MCF 10A (cell line): ENCODE measurements at regions of chrX and their contacts with region 1.

Region 1: DNA sequence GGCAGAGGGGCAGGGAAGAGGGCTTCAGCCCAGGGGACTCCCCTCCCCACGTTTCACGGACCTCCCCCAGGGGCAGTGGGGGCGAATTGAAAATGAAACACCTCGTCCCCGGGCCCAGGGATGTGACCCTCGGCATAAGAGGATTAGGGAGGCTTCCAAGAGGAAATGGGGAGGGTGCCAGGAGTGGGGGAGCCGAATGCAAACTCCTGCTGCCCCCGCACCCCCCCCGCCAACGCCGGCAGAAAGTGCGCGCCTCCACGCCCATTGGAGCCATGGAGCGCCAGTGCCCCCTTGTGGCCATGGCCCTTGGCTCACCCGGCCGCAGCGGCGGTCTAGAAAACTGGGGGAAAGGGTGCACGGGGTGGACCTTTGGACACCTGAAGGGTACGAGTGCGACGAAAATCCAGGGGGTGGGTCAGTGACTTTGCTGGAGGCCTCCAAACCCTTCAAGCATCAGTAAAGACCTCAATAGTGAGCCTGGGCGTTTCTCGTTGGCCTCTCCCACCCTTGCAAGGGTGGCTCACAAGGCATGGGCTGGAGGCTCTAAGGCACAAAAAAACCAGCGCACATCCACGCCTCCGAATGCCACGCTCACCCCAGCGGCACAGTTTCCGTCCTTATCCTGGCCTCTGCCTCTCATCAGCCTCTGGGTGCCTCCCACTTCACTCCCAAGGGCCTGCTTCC is 120.8 kb upstream of the PJA1 start:
- DNase-seq: peak; percentile 45
- H3K4me3 Mint-ChIP-seq: peak overlapping the region; percentile 60
- H3K27ac Mint-ChIP-seq: no peak overlapping the region
- H3K4me1 Mint-ChIP-seq: peaks cover 5% of the 10 kb centered on the region
- H3K27me3 Mint-ChIP-seq: peaks cover 75% of the 10 kb centered on the region
- CTCF ChIP-seq: peak; percentile 90

Region 2: DNA sequence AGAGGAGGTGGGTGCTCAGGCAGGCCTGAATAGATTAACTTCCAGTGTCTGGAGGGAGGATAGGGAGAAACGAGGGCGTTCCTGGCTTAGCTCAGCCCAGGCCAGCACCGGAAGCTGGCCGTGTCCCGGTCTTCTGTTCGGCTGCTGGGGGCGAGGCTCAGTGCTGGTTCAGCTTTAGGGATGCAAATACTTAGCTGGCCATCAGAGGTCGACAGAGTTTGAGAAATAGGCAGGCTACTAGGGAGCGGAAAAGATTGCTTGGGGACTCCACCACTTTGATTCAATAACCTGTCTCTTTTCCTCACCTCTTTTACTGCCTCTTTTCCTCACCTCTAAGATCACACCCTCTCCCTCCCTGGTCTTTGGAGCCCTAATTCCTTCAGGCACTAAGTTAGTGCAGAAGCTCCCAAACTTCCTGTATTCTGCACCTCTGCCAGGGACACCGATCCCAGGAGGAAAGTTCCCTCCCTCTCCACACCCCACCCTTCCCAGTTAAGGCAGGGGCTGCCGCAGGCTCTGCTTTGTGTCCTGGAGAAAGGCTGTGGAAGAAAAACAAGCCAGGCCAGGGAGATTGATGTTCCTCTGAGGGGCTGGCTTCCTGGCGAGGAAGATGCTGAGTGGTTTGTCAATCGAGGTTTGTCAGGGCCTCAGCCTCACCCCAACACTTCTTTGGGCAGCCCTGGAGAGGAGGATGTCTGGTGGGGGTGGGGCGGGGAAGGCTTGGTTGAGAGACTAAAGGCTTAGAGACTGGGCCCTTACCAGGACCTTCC is 463.2 kb before region 1 on chrX:
- CTCF ChIA-PET with region 1: interaction called, 173 read pairs
- POLR2A ChIA-PET with region 1: no interaction called
- intact Hi-C with region 1: loop called (anchors 1 kb)
- DNase-seq: peak; percentile 65
- H3K4me3 Mint-ChIP-seq: no peak overlapping the region
- H3K27ac Mint-ChIP-seq: no peak overlapping the region
- H3K4me1 Mint-ChIP-seq: peaks cover 11% of the 10 kb centered on the region
- H3K27me3 Mint-ChIP-seq: peaks cover 40% of the 10 kb centered on the region
- CTCF ChIP-seq: peak; percentile 76

Region 3: DNA sequence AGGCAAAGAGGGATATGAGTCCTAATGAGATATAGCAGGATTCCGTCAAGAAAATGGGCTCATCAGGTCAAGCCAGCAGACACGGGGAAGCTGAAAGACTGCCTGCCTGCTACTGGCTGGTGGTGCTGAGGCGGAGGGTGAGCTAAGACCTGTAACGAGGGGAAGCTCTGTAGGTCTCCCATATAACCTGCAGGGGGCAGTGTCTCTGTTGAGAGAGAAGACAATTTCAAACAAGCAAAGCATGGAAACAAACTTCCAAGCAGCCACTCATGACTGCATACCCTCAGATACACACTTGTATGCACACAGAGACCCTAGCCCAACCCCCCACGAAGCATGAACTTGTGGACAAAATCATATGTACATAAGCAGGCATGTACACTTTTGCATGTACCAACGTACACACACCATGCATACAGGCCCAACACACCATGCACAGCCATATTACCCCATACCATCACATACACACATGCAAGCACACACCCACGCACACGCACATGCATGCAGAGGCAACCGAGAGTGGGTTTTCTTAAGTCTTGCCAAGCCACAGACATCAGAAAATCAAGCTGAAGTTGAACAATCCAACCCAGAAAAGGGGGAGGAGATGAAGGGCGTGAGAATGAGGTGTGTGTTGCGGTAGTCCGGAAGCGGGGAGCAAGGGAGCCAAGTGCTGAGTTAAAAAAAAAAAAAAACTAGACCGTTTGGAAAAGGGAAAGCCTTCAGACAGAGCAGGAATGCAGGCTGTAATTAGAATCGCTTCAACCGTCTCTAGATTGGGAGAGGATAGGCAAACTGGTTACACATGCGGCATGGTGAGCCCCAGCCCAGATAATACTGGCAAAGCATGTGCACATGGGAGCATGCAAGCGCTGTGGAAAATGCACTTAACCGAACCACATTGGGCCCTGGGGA is 191.8 kb before region 1 on chrX:
- CTCF ChIA-PET with region 1: interaction called, 3 read pairs
- POLR2A ChIA-PET with region 1: no interaction called
- intact Hi-C with region 1: loop called (anchors 10 kb)
- DNase-seq: peak; percentile 70
- H3K4me3 Mint-ChIP-seq: no peak overlapping the region
- H3K27ac Mint-ChIP-seq: no peak overlapping the region
- H3K4me1 Mint-ChIP-seq: no peaks in the 10 kb centered on the region
- H3K27me3 Mint-ChIP-seq: peaks cover 5% of the 10 kb centered on the region
- CTCF ChIP-seq: peak; percentile 46